Naive thymus-derived CD4-positive, alpha-beta T cell (primary cell): ENCODE measurements at regions of chr7 and their contacts with region 1.

Region 1: DNA sequence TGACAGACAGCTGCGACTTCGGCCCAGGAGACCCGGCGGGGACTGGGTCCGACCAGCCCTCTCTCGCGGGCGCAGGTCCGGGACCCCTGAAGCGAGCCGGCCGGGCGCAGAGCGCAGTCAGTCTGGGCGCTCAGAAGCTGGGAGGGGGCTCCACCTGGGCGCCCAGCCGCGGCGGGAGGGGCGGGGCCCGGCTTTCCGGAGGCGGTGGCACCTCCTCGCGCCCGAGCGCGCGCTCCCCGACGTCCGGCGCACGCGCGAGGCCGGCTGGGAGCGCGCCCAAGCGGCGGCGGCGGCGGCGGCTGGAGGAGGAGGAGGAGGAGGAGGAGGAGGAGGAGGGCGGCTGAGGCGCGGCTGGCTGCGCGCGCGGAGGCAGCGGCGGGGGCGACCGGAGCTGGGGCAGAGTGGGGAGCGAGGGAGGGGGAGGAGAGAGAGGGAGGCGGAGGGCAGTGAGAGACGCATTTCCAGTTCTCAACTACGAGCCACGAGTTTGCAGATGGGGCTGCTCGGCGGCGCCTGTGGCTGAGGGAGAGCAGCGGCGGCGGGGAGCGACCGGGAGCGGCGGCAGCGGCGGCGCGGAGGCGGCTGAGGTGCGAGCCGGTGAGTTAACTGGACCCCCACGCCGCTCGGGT is at the start of gene PALS2:
- DNase-seq: peak; percentile 78 to 88 (median 85)
- ATAC-seq: peak; percentile 88
- H3K4me3 ChIP-seq: peak within 1 kb of the TSS; percentile 78
- H3K4me3 Mint-ChIP-seq: peak within 1 kb of the TSS; percentile 93 to 100 (median 94)
- H3K27ac ChIP-seq: peak within 1 kb of the TSS; percentile 77
- H3K27ac Mint-ChIP-seq: peak within 1 kb of the TSS; percentile 84 to 96 (median 94)
- H3K4me1 ChIP-seq: peaks cover 13 to 24% of the 10 kb centered on the region in 2 donors
- H3K4me1 Mint-ChIP-seq: peaks cover 21 to 52% (median 42%) of the 10 kb centered on the region in 7 donors
- H3K27me3 ChIP-seq: no peaks in the 10 kb centered on the region
- H3K27me3 Mint-ChIP-seq: peaks cover 0 to 45% (median 0%) of the 10 kb centered on the region in 5 donors
- total RNA-seq, gene PALS2: 15.4 to 58.4 (median 34.0) TPM

Region 2: DNA sequence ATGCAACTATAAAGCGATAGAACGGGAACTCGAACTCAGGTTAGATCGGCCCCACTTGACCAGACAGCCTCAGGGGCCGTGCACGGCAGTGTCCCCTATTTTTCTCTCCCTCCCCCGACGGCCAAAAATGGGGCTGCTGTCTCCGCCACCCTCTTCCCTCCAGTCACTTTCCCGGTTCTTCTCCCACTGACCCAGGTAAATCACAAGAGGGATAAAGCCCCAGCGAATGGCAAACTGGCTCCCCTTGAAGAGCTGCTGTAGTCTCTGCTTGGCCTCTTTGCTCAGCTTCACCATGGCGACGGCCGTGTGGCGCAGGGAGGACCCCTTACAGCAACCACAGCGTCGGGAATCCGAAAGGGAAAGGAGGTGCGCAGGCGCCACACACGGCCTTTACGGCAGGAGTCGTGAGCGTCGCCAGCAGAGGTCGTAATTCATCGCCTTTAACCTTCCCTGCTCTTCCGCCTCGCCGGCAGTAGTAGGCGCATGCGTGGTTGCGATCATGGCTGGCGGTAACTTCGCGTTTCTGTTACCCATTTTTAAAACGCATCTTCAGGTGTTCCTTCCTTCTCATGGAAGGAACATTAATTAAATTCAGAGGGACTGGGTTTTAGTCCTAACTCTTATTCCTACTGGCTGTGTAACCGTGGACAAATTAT is 1750.5 kb before region 1 on chr7 and contains the start of gene TOMM7:
- CTCF ChIA-PET with region 1: no interaction called
- POLR2A ChIA-PET with region 1: no interaction called
- intact Hi-C with region 1: loop called in 1 of 2 experiments (anchors 2 kb)
- DNase-seq: peak; percentile 68 to 92 (median 90)
- ATAC-seq: peak; percentile 99
- H3K4me3 ChIP-seq: peak within 1 kb of the TSS; percentile 83
- H3K4me3 Mint-ChIP-seq: peak within 1 kb of the TSS; percentile 93 to 100 (median 99)
- H3K27ac ChIP-seq: peak within 1 kb of the TSS; percentile 94
- H3K27ac Mint-ChIP-seq: peak within 1 kb of the TSS; percentile 94 to 100 (median 99)
- H3K4me1 ChIP-seq: peaks cover 6 to 19% of the 10 kb centered on the region in 2 donors
- H3K4me1 Mint-ChIP-seq: peaks cover 15 to 53% (median 43%) of the 10 kb centered on the region in 7 donors
- H3K27me3 ChIP-seq: peaks cover 0 to 4% of the 10 kb centered on the region in 2 donors
- H3K27me3 Mint-ChIP-seq: peaks cover 15 to 36% (median 19%) of the 10 kb centered on the region in 5 donors
- total RNA-seq, gene TOMM7: 302 to 737 (median 649) TPM

Region 3: DNA sequence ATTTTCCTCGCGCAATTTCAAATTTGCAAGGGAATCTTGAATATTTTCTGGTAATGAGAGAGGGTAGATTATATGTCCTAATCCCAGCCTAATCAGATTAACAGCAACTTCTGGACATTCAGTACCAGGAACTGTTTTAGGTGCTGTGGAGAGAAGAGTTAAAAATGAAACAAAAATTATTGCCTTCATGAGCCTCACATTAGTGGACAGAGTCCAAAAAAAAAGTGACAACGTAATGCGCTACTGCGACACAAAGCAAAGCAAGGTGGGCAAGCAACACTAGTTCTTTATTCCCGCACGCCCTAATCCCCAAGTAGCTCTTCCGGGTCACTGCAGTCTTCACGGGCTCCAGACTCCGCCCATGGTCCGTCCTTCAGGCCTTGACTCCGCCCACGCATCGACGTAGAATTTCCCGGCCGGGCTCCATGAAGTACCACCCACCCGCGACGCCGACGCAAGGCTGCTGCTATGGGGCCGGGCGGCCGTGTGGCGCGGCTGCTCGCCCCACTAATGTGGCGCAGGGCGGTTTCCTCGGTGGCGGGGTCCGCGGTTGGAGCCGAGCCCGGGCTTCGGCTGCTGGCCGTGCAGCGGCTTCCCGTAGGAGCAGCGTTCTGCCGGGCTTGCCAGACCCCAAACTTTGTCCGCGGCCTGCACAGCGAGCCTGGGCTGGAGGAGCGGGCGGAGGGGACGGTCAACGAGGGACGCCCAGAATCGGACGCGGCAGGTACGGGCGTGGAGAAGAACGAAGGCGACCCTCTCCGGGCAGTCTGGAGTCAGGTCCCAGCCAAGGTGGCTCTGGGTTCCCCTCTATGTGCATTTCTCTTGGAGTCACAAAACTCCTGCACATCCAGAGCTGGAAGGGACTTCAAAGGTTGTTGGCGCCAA is 1274.0 kb before region 1 on chr7 and contains the start of gene MALSU1:
- CTCF ChIA-PET with region 1: no interaction called
- POLR2A ChIA-PET with region 1: no interaction called
- intact Hi-C with region 1: loop called in 1 of 2 experiments (anchors 1 kb)
- DNase-seq: peak; percentile 90 to 96 (median 94)
- ATAC-seq: peak; percentile 100
- H3K4me3 ChIP-seq: peak within 1 kb of the TSS; percentile 96
- H3K4me3 Mint-ChIP-seq: peak within 1 kb of the TSS; percentile 90 to 97 (median 94)
- H3K27ac ChIP-seq: peak within 1 kb of the TSS; percentile 92
- H3K27ac Mint-ChIP-seq: peak within 1 kb of the TSS; percentile 96 to 100 (median 98)
- H3K4me1 ChIP-seq: peaks cover 14 to 23% of the 10 kb centered on the region in 2 donors
- H3K4me1 Mint-ChIP-seq: peaks cover 34 to 55% (median 48%) of the 10 kb centered on the region in 7 donors
- H3K27me3 ChIP-seq: no peaks in the 10 kb centered on the region
- H3K27me3 Mint-ChIP-seq: peaks cover 0 to 10% (median 0%) of the 10 kb centered on the region in 5 donors
- total RNA-seq, gene MALSU1: 32.7 to 48.3 (median 44.8) TPM

Region 4: GRCh38 chr7:23679898-23680413 is 893.2 kb before region 1 on chr7 and contains the start of gene FAM221A:
- CTCF ChIA-PET with region 1: no interaction called
- POLR2A ChIA-PET with region 1: no interaction called
- intact Hi-C with region 1: loop called (anchors 2 to 10 kb)
- DNase-seq: peak; percentile 52 to 80 (median 72)
- ATAC-seq: peak; percentile 99
- H3K4me3 ChIP-seq: peak within 1 kb of the TSS; percentile 95
- H3K4me3 Mint-ChIP-seq: peak within 1 kb of the TSS; percentile 89 to 98 (median 94)
- H3K27ac ChIP-seq: peak within 1 kb of the TSS; percentile 65
- H3K27ac Mint-ChIP-seq: peak within 1 kb of the TSS; percentile 45 to 90 (median 86)
- H3K4me1 ChIP-seq: no peaks in the 10 kb centered on the region
- H3K4me1 Mint-ChIP-seq: peaks cover 0 to 32% (median 13%) of the 10 kb centered on the region in 7 donors
- H3K27me3 ChIP-seq: no peaks in the 10 kb centered on the region
- H3K27me3 Mint-ChIP-seq: peaks cover 0 to 21% (median 3%) of the 10 kb centered on the region in 5 donors
- total RNA-seq, gene FAM221A: 4.0 to 8.1 (median 5.3) TPM

Region 5: DNA sequence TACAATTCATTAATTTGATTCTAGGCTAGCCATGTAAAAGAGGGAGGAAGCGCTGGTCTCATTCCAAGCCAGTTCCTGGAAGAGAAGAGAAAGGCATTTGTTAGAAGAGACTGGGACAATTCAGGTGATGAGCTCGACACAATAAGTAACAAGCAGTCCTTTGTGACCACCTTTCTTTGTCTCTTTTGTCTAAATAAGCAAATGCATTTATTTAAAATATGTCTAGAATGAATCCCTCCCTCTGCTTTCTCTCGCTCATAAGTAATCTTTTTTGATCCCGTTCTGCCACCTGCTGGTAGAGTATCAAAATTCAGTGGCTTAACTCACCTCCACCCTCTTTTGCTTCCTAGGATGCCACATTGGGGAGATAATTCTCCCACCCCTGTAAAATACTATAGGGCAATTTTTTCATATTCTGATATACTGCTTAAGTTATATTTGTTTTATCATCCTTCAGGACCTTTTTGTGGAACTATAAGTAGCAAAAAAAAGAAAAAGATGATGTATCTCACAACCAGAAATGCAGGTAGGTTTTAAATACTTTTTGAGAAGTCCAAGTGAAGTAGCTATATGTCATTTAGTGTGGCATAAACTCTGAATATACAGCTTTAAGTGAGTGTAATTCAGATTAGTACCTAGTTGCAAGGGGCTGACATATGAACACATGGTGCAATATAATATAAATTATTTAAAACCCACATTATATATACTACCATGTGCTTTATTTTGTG is 92.6 kb after region 1 on chr7:
- CTCF ChIA-PET with region 1: interaction called, 3 read pairs
- POLR2A ChIA-PET with region 1: no interaction called
- intact Hi-C with region 1: loop called (anchors 1 kb)
- DNase-seq: peak in 8 of 9 donors; percentile 14 to 59 (median 37)
- ATAC-seq: peak; percentile 52
- H3K4me3 ChIP-seq: no peak overlapping the region
- H3K4me3 Mint-ChIP-seq: no peak overlapping the region
- H3K27ac ChIP-seq: no peak overlapping the region
- H3K27ac Mint-ChIP-seq: peak overlapping the region in 1 of 9 donors; percentile 21
- H3K4me1 ChIP-seq: no peaks in the 10 kb centered on the region
- H3K4me1 Mint-ChIP-seq: peaks cover 0 to 4% (median 0%) of the 10 kb centered on the region in 7 donors
- H3K27me3 ChIP-seq: no peaks in the 10 kb centered on the region
- H3K27me3 Mint-ChIP-seq: no peaks in the 10 kb centered on the region

Region 6: DNA sequence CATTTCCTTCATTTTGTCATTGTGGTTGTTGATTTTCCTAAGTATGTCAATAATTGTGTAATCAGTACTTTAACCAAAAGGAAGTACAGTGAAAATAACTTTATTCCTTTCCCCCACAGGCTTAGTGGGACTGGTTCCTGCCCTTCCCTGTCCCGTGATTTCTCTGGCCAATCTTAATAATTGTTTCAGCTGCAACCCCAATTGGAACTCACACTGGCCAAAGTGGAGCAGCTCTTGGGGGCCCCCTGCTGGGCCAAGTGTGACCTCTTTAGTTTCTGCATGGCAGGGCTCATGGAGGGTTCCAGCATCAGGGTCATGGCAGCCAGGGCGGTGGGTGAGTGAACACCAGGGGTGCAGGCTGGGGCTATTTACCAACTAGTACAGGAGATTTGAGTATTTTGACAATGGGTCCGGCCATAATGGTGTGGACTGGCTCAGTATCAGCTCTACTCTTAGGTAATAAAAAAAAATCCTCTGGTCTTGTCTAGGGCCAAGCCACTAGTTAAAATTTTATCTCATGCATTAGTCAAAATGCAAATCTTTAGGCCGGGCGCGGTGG is 520.2 kb after region 1 on chr7:
- CTCF ChIA-PET with region 1: no interaction called
- POLR2A ChIA-PET with region 1: no interaction called
- intact Hi-C with region 1: loop called (anchors 2 to 10 kb)
- DNase-seq: peak; percentile 33 to 80 (median 60)
- ATAC-seq: peak; percentile 90
- H3K4me3 ChIP-seq: no peak overlapping the region
- H3K4me3 Mint-ChIP-seq: no peak overlapping the region
- H3K27ac ChIP-seq: no peak overlapping the region
- H3K27ac Mint-ChIP-seq: no peak overlapping the region
- H3K4me1 ChIP-seq: no peaks in the 10 kb centered on the region
- H3K4me1 Mint-ChIP-seq: peaks cover 0 to 15% (median 8%) of the 10 kb centered on the region in 7 donors
- H3K27me3 ChIP-seq: no peaks in the 10 kb centered on the region
- H3K27me3 Mint-ChIP-seq: peaks cover 0 to 14% (median 0%) of the 10 kb centered on the region in 5 donors

Region 7: GRCh38 chr7:25851332-25852210 is 1278.5 kb after region 1 on chr7:
- CTCF ChIA-PET with region 1: no interaction called
- POLR2A ChIA-PET with region 1: no interaction called
- intact Hi-C with region 1: loop called in 1 of 2 experiments (anchors 10 kb)
- DNase-seq: peak in 8 of 9 donors; percentile 43 to 69 (median 62)
- ATAC-seq: peak; percentile 84
- H3K4me3 ChIP-seq: no peak overlapping the region
- H3K4me3 Mint-ChIP-seq: peak overlapping the region; percentile 16 to 85 (median 76)
- H3K27ac ChIP-seq: no peak overlapping the region
- H3K27ac Mint-ChIP-seq: peak overlapping the region in 7 of 9 donors; percentile 5 to 79 (median 74)
- H3K4me1 ChIP-seq: peaks cover 3 to 9% of the 10 kb centered on the region in 2 donors
- H3K4me1 Mint-ChIP-seq: peaks cover 4 to 27% (median 19%) of the 10 kb centered on the region in 7 donors
- H3K27me3 ChIP-seq: peaks cover 29 to 50% of the 10 kb centered on the region in 2 donors
- H3K27me3 Mint-ChIP-seq: peaks cover 43 to 63% (median 59%) of the 10 kb centered on the region in 5 donors